Activated CD4-positive, alpha-beta T cell treated with anti-CD3 and anti-CD28 coated beads, Interleukin-2, amount 10 ng/mL, durations not matched to agents 24 days and 14 days (primary cell): ENCODE measurements at regions of chr11 and their contacts with region 1.

Region 1: GRCh38 chr11:65040847-65041621 is at the start of gene SAC3D1:
- DNase-seq: peak; percentile 98
- H3K4me3 Mint-ChIP-seq: peak within 1 kb of the TSS; percentile 93
- H3K27ac Mint-ChIP-seq: peak within 1 kb of the TSS; percentile 95
- H3K4me1 Mint-ChIP-seq: peaks cover 20% of the 10 kb centered on the region
- H3K27me3 Mint-ChIP-seq: no peaks in the 10 kb centered on the region
- total RNA-seq, gene SAC3D1: 16.3 and 18.0 TPM in 2 replicates

Region 2: GRCh38 chr11:64916775-64917662 is 124.0 kb before region 1 on chr11 and contains the start of gene ATG2A:
- intact Hi-C with region 1: loop called (anchors 2 kb)
- DNase-seq: peak; percentile 100
- H3K4me3 Mint-ChIP-seq: peak within 1 kb of the TSS; percentile 90
- H3K27ac Mint-ChIP-seq: peak within 1 kb of the TSS; percentile 92
- H3K4me1 Mint-ChIP-seq: peaks cover 23% of the 10 kb centered on the region
- H3K27me3 Mint-ChIP-seq: no peaks in the 10 kb centered on the region
- total RNA-seq, gene ATG2A: 22.5 and 23.1 TPM in 2 replicates

Region 3: DNA sequence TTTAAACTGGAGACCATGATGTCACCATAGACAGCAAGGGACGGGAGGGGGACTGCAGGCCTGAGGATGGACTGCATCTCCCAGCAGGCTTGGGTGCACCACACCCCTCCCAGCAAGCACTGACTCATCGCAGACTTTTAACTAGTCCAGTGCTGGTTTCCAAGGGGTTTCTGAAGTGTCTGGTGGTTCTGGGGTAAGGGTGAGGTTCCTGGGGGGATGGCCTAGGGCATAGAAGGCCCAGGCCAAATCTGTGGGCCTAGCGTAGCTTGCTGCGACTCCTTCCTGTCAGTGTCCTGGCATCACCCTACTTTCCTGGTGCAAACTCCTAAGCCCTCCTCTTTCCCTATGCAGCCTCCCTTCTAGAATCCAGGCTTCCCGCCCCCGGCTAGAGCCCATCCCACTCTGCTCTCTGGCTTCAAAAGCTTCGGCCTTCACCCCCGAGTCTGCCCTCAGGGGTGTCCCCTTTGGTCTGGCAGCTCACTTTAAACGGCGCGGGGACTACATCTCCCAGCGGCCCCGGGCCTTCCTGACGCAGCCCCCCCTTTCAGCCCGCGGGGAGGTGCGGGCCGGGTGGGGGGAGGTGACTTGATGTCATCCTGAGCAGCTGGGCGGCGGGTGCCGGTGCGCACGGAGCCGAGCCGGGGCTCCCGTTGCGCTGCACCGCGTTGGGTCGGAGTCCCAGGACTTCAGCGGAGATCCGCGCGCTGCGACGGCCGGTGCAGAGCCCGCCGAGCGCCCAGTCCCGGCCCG is 116.8 kb before region 1 on chr11 and contains the start of gene PPP2R5B:
- intact Hi-C with region 1: loop called (anchors 1 kb)
- DNase-seq: peak; percentile 98
- H3K4me3 Mint-ChIP-seq: peak within 1 kb of the TSS; percentile 91
- H3K27ac Mint-ChIP-seq: peak within 1 kb of the TSS; percentile 99
- H3K4me1 Mint-ChIP-seq: peaks cover 10% of the 10 kb centered on the region
- H3K27me3 Mint-ChIP-seq: no peaks in the 10 kb centered on the region
- total RNA-seq, gene PPP2R5B: 11.4 and 16.7 TPM in 2 replicates

Region 4: GRCh38 chr11:65083834-65084597 is 43.0 kb after region 1 on chr11 and contains the starts of genes CDCA5 and ZFPL1:
- intact Hi-C with region 1: loop called (anchors 1 kb)
- DNase-seq: peak; percentile 100
- H3K4me3 Mint-ChIP-seq: peak within 1 kb of the TSS; percentile 99
- H3K27ac Mint-ChIP-seq: peak within 1 kb of the TSS; percentile 99
- H3K4me1 Mint-ChIP-seq: peaks cover 46% of the 10 kb centered on the region
- H3K27me3 Mint-ChIP-seq: peaks cover 2% of the 10 kb centered on the region
- total RNA-seq, gene CDCA5: 94.4 and 95.1 TPM in 2 replicates
- total RNA-seq, gene ZFPL1: 33.3 and 34.7 TPM in 2 replicates